Breast epithelium (tissue), 4 donors: ENCODE measurements at regions of chr5 and their contacts with region 1.

Region 1: DNA sequence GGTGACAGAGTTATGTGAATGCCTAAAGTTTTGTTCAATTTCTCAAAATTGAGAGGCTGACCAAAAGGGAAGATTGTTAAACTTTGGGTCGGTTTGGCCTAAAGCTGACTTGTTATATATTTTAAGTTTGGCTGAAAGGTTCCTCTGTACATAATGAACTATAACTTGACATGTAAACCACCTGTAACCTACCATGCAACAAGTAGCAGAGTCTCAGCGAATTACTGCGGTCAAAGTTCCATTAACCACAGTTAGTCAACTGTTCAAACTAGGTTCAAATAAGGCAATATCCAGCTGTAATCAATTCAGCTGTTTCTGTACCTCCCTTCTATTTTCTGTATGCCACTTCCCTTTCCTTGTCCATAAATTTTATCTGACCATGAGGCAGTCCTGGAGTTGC is 325.1 kb upstream of the NMUR2 start:
- DNase-seq: no peak
- H3K4me3 ChIP-seq: no peak overlapping the region
- H3K27ac ChIP-seq: no peak overlapping the region
- H3K4me1 ChIP-seq: no peaks in the 10 kb centered on the region
- H3K27me3 ChIP-seq: no peaks in the 10 kb centered on the region
- CTCF ChIP-seq: no peak
- POLR2A ChIP-seq: no peak

Region 2: GRCh38 chr5:152142840-152143469 is 587.2 kb before region 1 on chr5:
- intact Hi-C with region 1: loop called (anchors 5 kb)
- DNase-seq: no peak
- H3K4me3 ChIP-seq: no peak overlapping the region
- H3K27ac ChIP-seq: no peak overlapping the region
- H3K4me1 ChIP-seq: no peaks in the 10 kb centered on the region
- H3K27me3 ChIP-seq: no peaks in the 10 kb centered on the region
- CTCF ChIP-seq: peak; percentile 53 to 72 (median 60)
- POLR2A ChIP-seq: no peak

Region 3: DNA sequence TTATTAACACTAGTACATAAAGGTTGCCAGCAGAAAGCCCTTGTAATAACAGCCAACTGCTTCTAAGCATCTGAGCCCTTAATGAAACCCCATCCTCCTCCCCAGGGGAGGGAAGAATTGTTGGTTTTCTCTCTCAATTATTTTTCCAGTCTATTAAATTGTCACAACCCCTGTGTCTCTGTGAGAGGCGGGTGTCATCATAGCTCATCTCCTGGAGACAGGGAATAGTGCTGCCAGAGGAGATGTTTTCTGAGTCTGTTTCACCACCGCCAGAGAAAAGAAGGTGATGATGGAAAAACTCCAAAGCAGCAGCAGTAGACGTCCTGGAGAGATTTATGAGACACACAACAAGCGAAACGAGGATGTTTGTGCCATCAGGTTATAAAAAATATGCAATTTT is 54.0 kb before region 1 on chr5:
- intact Hi-C with region 1: no loop called
- DNase-seq: no peak
- H3K4me3 ChIP-seq: no peak overlapping the region
- H3K27ac ChIP-seq: no peak overlapping the region
- H3K4me1 ChIP-seq: no peaks in the 10 kb centered on the region
- H3K27me3 ChIP-seq: no peaks in the 10 kb centered on the region
- CTCF ChIP-seq: no peak
- POLR2A ChIP-seq: no peak